ENCODE measurements at regions of chr21 and their contacts with region 1.

Region 1: DNA sequence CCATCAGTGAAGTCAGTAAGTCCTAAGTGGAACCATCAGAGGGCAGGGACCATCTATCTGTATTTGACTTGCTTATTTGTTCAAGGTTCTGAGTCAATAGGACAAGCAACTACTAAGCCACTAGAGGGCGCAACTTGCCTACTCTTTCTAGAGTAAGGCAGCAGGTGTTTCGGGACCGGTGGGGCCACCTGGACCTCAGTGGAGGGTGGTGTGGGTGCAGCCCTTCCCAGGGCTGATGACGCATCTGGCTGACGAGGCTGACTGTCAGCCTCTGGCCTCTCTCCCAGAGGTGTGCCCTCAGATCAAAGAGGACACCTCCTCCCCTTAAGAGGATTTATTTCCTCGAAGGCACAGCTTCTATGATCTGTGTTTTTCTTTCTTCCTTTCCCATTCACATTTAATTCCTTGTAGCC is 6.6 kb downstream of the CBR3 start:
- DNase-seq: peak; percentile 98
- H3K4me3 Mint-ChIP-seq: no peak overlapping the region
- H3K27ac Mint-ChIP-seq: no peak overlapping the region
- H3K4me1 Mint-ChIP-seq: peaks cover 9% of the 10 kb centered on the region
- H3K27me3 Mint-ChIP-seq: no peaks in the 10 kb centered on the region
- CTCF ChIP-seq: peak; percentile 77

Region 2: GRCh38 chr21:35120631-35121186 is 1020.8 kb before region 1 on chr21:
- CTCF ChIA-PET with region 1: no interaction called
- POLR2A ChIA-PET with region 1: no interaction called
- intact Hi-C with region 1: no loop called
- DNase-seq: no peak
- H3K4me3 Mint-ChIP-seq: no peak overlapping the region
- H3K27ac Mint-ChIP-seq: no peak overlapping the region
- H3K4me1 Mint-ChIP-seq: no peaks in the 10 kb centered on the region
- H3K27me3 Mint-ChIP-seq: no peaks in the 10 kb centered on the region
- CTCF ChIP-seq: no peak

Region 3: GRCh38 chr21:36156339-36156814 is 14.9 kb after region 1 on chr21:
- CTCF ChIA-PET with region 1: interaction called, 50 read pairs
- POLR2A ChIA-PET with region 1: no interaction called
- intact Hi-C with region 1: no loop called
- DNase-seq: peak; percentile 99
- H3K4me3 Mint-ChIP-seq: peak overlapping the region; percentile 70
- H3K27ac Mint-ChIP-seq: no peak overlapping the region
- H3K4me1 Mint-ChIP-seq: peaks cover 11% of the 10 kb centered on the region
- H3K27me3 Mint-ChIP-seq: no peaks in the 10 kb centered on the region
- CTCF ChIP-seq: no peak

Region 4: DNA sequence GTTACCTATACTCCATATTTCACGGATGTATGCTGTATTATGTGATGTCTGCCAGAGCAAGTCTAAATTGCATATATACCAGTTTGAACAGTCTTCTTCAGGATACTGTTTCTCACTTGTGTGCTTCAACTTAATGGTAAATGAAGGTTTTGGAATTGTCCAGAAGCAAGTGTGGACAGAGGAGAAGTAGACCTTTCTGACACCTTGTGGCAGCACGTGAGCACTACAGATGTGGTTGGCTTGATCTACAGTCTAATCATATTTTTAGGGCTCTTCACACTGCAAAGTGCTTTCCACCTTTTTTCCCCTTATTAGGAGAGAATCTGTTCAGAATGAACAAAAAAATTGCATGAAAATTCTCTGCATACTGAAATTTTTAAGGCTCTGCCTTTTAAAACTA is 189.4 kb after region 1 on chr21:
- CTCF ChIA-PET with region 1: interaction called, 7 read pairs
- POLR2A ChIA-PET with region 1: interaction called, 4 read pairs
- intact Hi-C with region 1: loop called (anchors 1 kb)
- DNase-seq: peak; percentile 67
- H3K4me3 Mint-ChIP-seq: no peak overlapping the region
- H3K27ac Mint-ChIP-seq: peak overlapping the region; percentile 54
- H3K4me1 Mint-ChIP-seq: peaks cover 10% of the 10 kb centered on the region
- H3K27me3 Mint-ChIP-seq: no peaks in the 10 kb centered on the region
- CTCF ChIP-seq: peak; percentile 57

Region 5: GRCh38 chr21:36419996-36420395 is 278.5 kb after region 1 on chr21:
- CTCF ChIA-PET with region 1: no interaction called
- POLR2A ChIA-PET with region 1: no interaction called
- intact Hi-C with region 1: loop called (anchors 2 kb)
- DNase-seq: peak; percentile 83
- H3K4me3 Mint-ChIP-seq: no peak overlapping the region
- H3K27ac Mint-ChIP-seq: no peak overlapping the region
- H3K4me1 Mint-ChIP-seq: no peaks in the 10 kb centered on the region
- H3K27me3 Mint-ChIP-seq: no peaks in the 10 kb centered on the region
- CTCF ChIP-seq: peak; percentile 65

Measured in MCF 10A (cell line).